Calu3 (cell line): ENCODE measurements at regions of chr16 and their contacts with region 1.

Region 1: DNA sequence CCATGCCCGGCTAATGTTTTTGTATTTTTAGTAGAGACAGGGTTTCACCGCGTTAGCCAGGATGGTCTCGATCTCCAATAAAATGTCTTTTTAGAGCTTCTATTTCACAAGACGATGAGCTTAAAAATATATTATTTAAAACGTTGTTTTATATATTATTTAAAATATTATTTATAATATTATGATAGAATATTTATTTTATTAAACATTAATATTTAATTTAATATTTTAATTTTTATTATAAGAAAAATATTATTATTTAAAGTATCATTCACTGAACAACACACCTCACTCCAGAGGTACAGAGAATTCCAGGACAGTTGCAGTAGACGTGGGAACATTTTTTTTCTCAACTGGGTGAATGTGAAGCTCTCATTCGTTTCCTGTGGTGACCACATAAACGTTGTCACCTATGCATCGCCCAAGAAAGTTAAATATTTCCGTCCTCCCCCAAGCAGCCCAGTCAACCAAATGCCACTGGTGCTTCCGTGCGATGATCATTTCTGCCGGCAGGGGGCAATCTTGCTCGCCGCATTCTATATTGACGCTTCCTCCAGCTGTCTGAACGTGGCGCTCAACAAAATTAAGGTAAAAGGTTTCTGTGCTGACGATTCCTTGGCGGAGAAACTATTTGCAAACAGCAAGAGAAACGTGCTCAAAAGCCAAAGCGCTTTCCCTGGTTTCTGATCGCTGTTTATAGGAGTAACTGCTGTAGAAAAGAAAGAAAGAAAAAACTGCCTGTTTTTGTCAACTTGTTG is 41.7 kb upstream of the PRSS54 start:
- DNase-seq: peak; percentile 90
- H3K4me3 Mint-ChIP-seq: no peak overlapping the region
- H3K27ac Mint-ChIP-seq: no peak overlapping the region
- H3K4me1 Mint-ChIP-seq: no peaks in the 10 kb centered on the region
- H3K27me3 Mint-ChIP-seq: peaks cover 3% of the 10 kb centered on the region
- CTCF ChIP-seq: peak; percentile 95

Region 2: GRCh38 chr16:58299757-58300349 is 36.7 kb before region 1 on chr16:
- CTCF ChIA-PET with region 1: no interaction called
- intact Hi-C with region 1: no loop called
- DNase-seq: peak; percentile 46
- H3K4me3 Mint-ChIP-seq: no peak overlapping the region
- H3K27ac Mint-ChIP-seq: no peak overlapping the region
- H3K4me1 Mint-ChIP-seq: no peaks in the 10 kb centered on the region
- H3K27me3 Mint-ChIP-seq: peaks cover 45% of the 10 kb centered on the region
- CTCF ChIP-seq: peak; percentile 53

Region 3: GRCh38 chr16:58487566-58488351 is 151.2 kb after region 1 on chr16:
- CTCF ChIA-PET with region 1: interaction called, 56 read pairs
- intact Hi-C with region 1: loop called (anchors 1 kb)
- DNase-seq: peak; percentile 90
- H3K4me3 Mint-ChIP-seq: no peak overlapping the region
- H3K27ac Mint-ChIP-seq: no peak overlapping the region
- H3K4me1 Mint-ChIP-seq: no peaks in the 10 kb centered on the region
- H3K27me3 Mint-ChIP-seq: peaks cover 57% of the 10 kb centered on the region
- CTCF ChIP-seq: peak; percentile 86

Region 4: DNA sequence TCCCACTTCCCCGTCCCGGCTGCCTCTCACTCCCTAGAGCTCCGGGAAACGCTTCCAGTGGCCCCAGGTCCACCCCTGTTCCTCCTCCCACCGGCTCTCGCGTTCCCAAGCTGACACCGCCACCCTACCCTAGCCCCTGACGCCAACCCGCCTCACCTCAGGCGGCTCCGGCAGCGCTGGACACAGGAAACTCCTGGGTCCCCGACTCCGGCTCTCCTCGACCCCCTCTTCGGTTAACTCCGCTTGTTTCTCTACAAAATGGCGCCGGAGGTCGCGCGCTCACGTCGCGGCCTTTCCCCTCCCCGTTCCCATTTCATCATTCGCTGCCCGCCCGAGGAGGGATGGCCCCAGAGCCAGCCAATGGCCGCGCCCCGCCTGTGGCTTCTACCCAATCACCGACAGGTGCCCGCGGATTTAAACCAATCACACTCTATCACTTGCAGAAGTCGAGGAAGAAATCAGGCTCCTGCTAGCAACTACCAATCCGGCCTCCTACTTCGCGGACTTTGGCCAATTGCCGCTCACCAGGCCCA is 293.1 kb after region 1 on chr16 and contains the start of gene CNOT1:
- CTCF ChIA-PET with region 1: no interaction called
- intact Hi-C with region 1: loop called (anchors 10 kb)
- DNase-seq: peak; percentile 99
- H3K4me3 Mint-ChIP-seq: peak within 1 kb of the TSS; percentile 99
- H3K27ac Mint-ChIP-seq: peak within 1 kb of the TSS; percentile 100
- H3K4me1 Mint-ChIP-seq: no peaks in the 10 kb centered on the region
- H3K27me3 Mint-ChIP-seq: no peaks in the 10 kb centered on the region
- CTCF ChIP-seq: no peak
- total RNA-seq, gene CNOT1: 270 and 299 TPM in 2 replicates

Region 5: GRCh38 chr16:58661199-58661830 is 324.8 kb after region 1 on chr16:
- CTCF ChIA-PET with region 1: interaction called, 11 read pairs
- intact Hi-C with region 1: loop called (anchors 1 kb)
- DNase-seq: peak; percentile 66
- H3K4me3 Mint-ChIP-seq: no peak overlapping the region
- H3K27ac Mint-ChIP-seq: no peak overlapping the region
- H3K4me1 Mint-ChIP-seq: no peaks in the 10 kb centered on the region
- H3K27me3 Mint-ChIP-seq: peaks cover 14% of the 10 kb centered on the region
- CTCF ChIP-seq: peak; percentile 59